B cell (primary cell): ENCODE measurements at regions of chrX and their contacts with region 1.

Region 1: GRCh38 chrX:43557792-43558191 is 98.3 kb upstream of the MAOA start:
- DNase-seq: peak; percentile 74
- ATAC-seq: peak; percentile 47
- H3K4me3 ChIP-seq: peak overlapping the region in 1 of 5 experiments; percentile 3
- H3K4me3 Mint-ChIP-seq: no peak overlapping the region
- H3K27ac ChIP-seq: no peak overlapping the region
- H3K27ac Mint-ChIP-seq: no peak overlapping the region
- H3K4me1 ChIP-seq: peaks cover 4% of the 10 kb centered on the region in 2 donors
- H3K4me1 Mint-ChIP-seq: peaks cover 13% of the 10 kb centered on the region
- H3K27me3 ChIP-seq: no peaks in the 10 kb centered on the region
- H3K27me3 Mint-ChIP-seq: no peaks in the 10 kb centered on the region
- CTCF ChIP-seq: peak; percentile 72

Region 2: DNA sequence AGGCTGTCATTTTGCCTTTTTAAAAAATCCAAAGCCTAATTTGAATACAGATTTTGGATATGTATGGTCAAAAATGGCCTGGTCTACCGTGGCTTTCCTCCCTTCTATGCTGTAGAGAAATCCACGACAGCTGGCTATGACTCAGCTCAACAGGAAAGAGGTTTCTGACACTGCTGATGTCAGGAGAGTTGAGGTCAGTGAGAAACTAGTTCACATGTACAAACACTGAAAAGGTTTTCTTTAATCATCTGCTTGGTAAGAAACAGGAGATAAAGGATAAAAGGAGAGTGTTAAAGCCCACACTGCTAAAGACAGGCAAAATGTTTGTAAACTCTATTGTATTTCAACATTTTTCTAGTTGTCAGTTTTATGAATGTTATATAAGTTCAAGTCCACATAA is 1996.7 kb before region 1 on chrX:
- CTCF ChIA-PET with region 1: no interaction called
- POLR2A ChIA-PET with region 1: no interaction called
- intact Hi-C with region 1: loop called (anchors 5 kb)
- DNase-seq: no peak
- ATAC-seq: peak; percentile 49
- H3K4me3 ChIP-seq: no peak overlapping the region
- H3K4me3 Mint-ChIP-seq: no peak overlapping the region
- H3K27ac ChIP-seq: no peak overlapping the region
- H3K27ac Mint-ChIP-seq: no peak overlapping the region
- H3K4me1 ChIP-seq: peaks cover 7 to 13% of the 10 kb centered on the region in 2 donors
- H3K4me1 Mint-ChIP-seq: peaks cover 20% of the 10 kb centered on the region
- H3K27me3 ChIP-seq: no peaks in the 10 kb centered on the region
- H3K27me3 Mint-ChIP-seq: no peaks in the 10 kb centered on the region
- CTCF ChIP-seq: no peak

Region 3: GRCh38 chrX:41781502-41781901 is 1776.3 kb before region 1 on chrX:
- CTCF ChIA-PET with region 1: interaction called, 31 read pairs
- POLR2A ChIA-PET with region 1: no interaction called
- intact Hi-C with region 1: loop called (anchors 1 kb)
- DNase-seq: peak; percentile 49
- ATAC-seq: peak; percentile 53
- H3K4me3 ChIP-seq: no peak overlapping the region
- H3K4me3 Mint-ChIP-seq: no peak overlapping the region
- H3K27ac ChIP-seq: no peak overlapping the region
- H3K27ac Mint-ChIP-seq: no peak overlapping the region
- H3K4me1 ChIP-seq: peaks cover 0 to 3% of the 10 kb centered on the region in 2 donors
- H3K4me1 Mint-ChIP-seq: peaks cover 4% of the 10 kb centered on the region
- H3K27me3 ChIP-seq: no peaks in the 10 kb centered on the region
- H3K27me3 Mint-ChIP-seq: no peaks in the 10 kb centered on the region
- CTCF ChIP-seq: peak; percentile 79

Region 4: GRCh38 chrX:41796577-41796976 is 1761.2 kb before region 1 on chrX:
- CTCF ChIA-PET with region 1: interaction called, 45 read pairs
- POLR2A ChIA-PET with region 1: no interaction called
- intact Hi-C with region 1: loop called (anchors 1 kb)
- DNase-seq: no peak
- ATAC-seq: no peak
- H3K4me3 ChIP-seq: no peak overlapping the region
- H3K4me3 Mint-ChIP-seq: no peak overlapping the region
- H3K27ac ChIP-seq: no peak overlapping the region
- H3K27ac Mint-ChIP-seq: peak overlapping the region; percentile 60
- H3K4me1 ChIP-seq: peaks cover 19 to 20% of the 10 kb centered on the region in 2 donors
- H3K4me1 Mint-ChIP-seq: peaks cover 30% of the 10 kb centered on the region
- H3K27me3 ChIP-seq: no peaks in the 10 kb centered on the region
- H3K27me3 Mint-ChIP-seq: no peaks in the 10 kb centered on the region
- CTCF ChIP-seq: no peak

Region 5: DNA sequence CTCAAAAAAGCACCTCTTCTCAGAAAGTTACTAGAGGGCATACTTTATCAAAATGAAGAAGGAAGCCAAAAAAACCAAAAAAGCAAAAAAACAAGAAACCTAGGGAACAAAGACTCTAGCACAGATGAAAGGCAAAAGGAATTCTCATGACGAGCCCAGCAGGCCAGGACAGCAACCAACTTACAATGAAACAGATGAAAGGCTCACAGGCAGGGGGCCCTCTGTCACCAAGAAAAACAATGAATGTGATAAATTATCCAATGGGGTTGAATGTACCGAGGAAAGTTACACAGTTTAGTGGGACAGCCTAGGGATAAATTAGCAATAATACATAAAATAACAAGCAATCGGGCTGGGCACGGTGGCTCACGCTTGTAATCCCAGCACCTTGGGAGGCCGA is 1754.8 kb before region 1 on chrX:
- CTCF ChIA-PET with region 1: interaction called, 45 read pairs
- POLR2A ChIA-PET with region 1: no interaction called
- intact Hi-C with region 1: loop called (anchors 1 kb)
- DNase-seq: no peak
- ATAC-seq: no peak
- H3K4me3 ChIP-seq: no peak overlapping the region
- H3K4me3 Mint-ChIP-seq: no peak overlapping the region
- H3K27ac ChIP-seq: no peak overlapping the region
- H3K27ac Mint-ChIP-seq: no peak overlapping the region
- H3K4me1 ChIP-seq: peaks cover 13 to 16% of the 10 kb centered on the region in 2 donors
- H3K4me1 Mint-ChIP-seq: peaks cover 34% of the 10 kb centered on the region
- H3K27me3 ChIP-seq: no peaks in the 10 kb centered on the region
- H3K27me3 Mint-ChIP-seq: no peaks in the 10 kb centered on the region
- CTCF ChIP-seq: no peak

Region 6: DNA sequence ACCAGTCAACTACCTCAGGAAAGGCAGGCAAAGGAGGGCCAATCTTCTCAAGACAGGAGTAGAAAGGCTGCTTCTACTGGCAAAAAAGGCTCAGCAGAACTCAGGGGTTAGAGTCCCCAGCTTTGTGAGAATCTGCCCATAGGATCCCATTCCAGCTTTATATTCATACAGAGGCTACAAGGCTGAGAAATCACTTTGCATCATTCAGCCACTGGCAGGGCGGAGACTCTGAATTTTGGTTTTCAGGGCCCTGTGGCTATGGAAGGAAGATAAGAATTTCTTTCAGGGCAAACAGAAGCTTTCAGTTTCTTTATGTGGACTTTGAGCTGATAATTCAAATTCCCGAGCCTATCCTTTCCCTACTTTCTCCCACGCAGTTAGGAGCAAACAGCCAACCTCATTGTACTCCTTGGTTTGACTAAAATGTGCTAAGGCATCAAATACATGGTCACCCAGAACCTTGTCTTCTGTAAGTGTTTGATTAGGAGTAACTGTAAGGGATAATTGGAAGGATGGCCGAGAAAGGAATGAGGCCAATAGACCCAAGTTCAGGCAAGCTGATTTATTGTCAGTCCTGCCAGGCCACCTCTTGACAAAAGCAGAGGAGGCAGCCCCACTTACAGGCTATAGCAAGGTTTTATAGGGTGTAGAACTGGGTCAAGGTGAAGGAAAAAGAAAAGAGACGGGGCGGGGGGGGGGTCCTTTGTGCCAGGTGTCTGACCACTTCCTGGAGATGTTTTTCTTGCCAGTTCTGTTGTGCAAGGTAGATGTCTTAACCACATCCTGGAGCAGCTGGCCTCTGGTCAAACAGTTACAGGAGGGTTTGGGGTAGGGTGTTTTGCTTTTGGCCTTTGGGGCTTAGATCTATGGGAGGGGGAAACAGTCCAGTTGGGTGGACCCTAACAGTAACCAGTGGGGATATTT is 614.5 kb before region 1 on chrX:
- CTCF ChIA-PET with region 1: interaction called, 5 read pairs
- POLR2A ChIA-PET with region 1: interaction called, 3 read pairs
- intact Hi-C with region 1: loop called (anchors 10 kb)
- DNase-seq: peak; percentile 41
- ATAC-seq: peak; percentile 75
- H3K4me3 ChIP-seq: peak overlapping the region in 1 of 5 experiments; percentile 19
- H3K4me3 Mint-ChIP-seq: peak overlapping the region; percentile 52
- H3K27ac ChIP-seq: peak overlapping the region; percentile 79 to 89
- H3K27ac Mint-ChIP-seq: peak overlapping the region; percentile 99
- H3K4me1 ChIP-seq: peaks cover 65% of the 10 kb centered on the region in 2 donors
- H3K4me1 Mint-ChIP-seq: peaks cover 73% of the 10 kb centered on the region
- H3K27me3 ChIP-seq: no peaks in the 10 kb centered on the region
- H3K27me3 Mint-ChIP-seq: no peaks in the 10 kb centered on the region
- CTCF ChIP-seq: no peak

Region 7: DNA sequence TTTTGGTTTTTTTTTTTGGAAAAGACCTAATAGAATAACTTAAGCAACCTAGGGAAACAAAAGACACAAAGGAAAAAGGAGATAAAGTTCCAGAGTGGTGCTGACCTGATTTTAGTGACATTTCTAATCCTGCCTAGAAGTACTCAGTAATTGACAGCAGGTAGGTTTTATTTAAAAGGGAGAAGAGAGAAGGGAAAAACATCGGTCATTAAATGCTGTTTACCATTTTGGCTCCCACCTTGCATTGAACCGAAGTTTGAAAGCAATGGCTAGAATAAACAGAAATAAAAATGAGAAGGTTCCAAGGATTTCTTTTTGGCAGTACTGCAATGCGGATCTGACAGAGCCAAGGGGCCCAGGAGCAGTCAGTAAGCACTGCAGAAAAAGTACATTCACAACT is 17.5 kb before region 1 on chrX:
- CTCF ChIA-PET with region 1: no interaction called
- POLR2A ChIA-PET with region 1: no interaction called
- intact Hi-C with region 1: no loop called
- DNase-seq: no peak
- ATAC-seq: no peak
- H3K4me3 ChIP-seq: no peak overlapping the region
- H3K4me3 Mint-ChIP-seq: no peak overlapping the region
- H3K27ac ChIP-seq: no peak overlapping the region
- H3K27ac Mint-ChIP-seq: no peak overlapping the region
- H3K4me1 ChIP-seq: no peaks in the 10 kb centered on the region
- H3K4me1 Mint-ChIP-seq: peaks cover 2% of the 10 kb centered on the region
- H3K27me3 ChIP-seq: no peaks in the 10 kb centered on the region
- H3K27me3 Mint-ChIP-seq: no peaks in the 10 kb centered on the region
- CTCF ChIP-seq: no peak

Region 8: DNA sequence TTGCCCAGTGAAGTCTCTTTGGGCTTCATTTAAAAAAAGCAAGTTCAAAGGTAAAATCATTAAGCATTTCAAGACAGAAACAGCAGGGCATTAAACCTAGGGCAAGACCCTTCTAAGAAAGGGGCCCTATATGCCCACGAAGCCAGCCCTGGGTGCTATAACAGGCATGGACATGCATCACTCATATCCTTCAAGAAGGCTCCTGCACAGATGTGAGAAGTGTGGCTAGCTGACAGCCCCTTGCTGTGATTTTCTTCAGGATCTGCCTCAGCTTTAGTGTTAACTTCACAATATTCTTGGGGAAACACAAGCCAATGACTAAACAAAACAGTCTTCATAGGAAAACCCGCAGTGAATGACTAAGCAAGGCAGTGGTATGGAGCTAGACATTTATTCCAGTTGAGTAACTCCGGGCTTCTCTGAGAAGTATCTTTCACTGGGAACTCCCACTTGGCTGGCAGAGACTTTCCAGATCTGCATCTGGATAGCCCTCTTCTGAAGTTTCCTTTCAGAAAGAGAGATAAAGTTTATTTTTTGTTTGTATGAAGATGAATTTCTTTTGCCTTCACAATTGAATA is 86.4 kb after region 1 on chrX:
- CTCF ChIA-PET with region 1: no interaction called
- POLR2A ChIA-PET with region 1: no interaction called
- intact Hi-C with region 1: no loop called
- DNase-seq: no peak
- ATAC-seq: no peak
- H3K4me3 ChIP-seq: no peak overlapping the region
- H3K4me3 Mint-ChIP-seq: no peak overlapping the region
- H3K27ac ChIP-seq: no peak overlapping the region
- H3K27ac Mint-ChIP-seq: no peak overlapping the region
- H3K4me1 ChIP-seq: no peaks in the 10 kb centered on the region
- H3K4me1 Mint-ChIP-seq: no peaks in the 10 kb centered on the region
- H3K27me3 ChIP-seq: no peaks in the 10 kb centered on the region
- H3K27me3 Mint-ChIP-seq: peaks cover 4% of the 10 kb centered on the region
- CTCF ChIP-seq: no peak

Region 9: GRCh38 chrX:43750248-43750676 is 192.5 kb after region 1 on chrX:
- CTCF ChIA-PET with region 1: interaction called, 30 read pairs
- POLR2A ChIA-PET with region 1: no interaction called
- intact Hi-C with region 1: no loop called
- DNase-seq: peak; percentile 65
- ATAC-seq: peak; percentile 64
- H3K4me3 ChIP-seq: no peak overlapping the region
- H3K4me3 Mint-ChIP-seq: no peak overlapping the region
- H3K27ac ChIP-seq: no peak overlapping the region
- H3K27ac Mint-ChIP-seq: no peak overlapping the region
- H3K4me1 ChIP-seq: peaks cover 0 to 3% of the 10 kb centered on the region in 2 donors
- H3K4me1 Mint-ChIP-seq: no peaks in the 10 kb centered on the region
- H3K27me3 ChIP-seq: peaks cover 0 to 3% (median 0%) of the 10 kb centered on the region in 4 experiments
- H3K27me3 Mint-ChIP-seq: peaks cover 3% of the 10 kb centered on the region
- CTCF ChIP-seq: peak; percentile 58